CD8-positive, alpha-beta T cell (primary cell): ENCODE measurements at regions of chr6 and their contacts with region 1.

Region 1: GRCh38 chr6:29705389-29706231 is 17.6 kb upstream of the HLA-F start:
- DNase-seq: peak in 2 of 9 experiments; percentile 57 to 73
- ATAC-seq: no peak
- H3K4me3 ChIP-seq: no peak overlapping the region
- H3K4me3 Mint-ChIP-seq: peak overlapping the region; percentile 26
- H3K27ac ChIP-seq: no peak overlapping the region
- H3K27ac Mint-ChIP-seq: peak overlapping the region; percentile 77
- H3K4me1 ChIP-seq: peaks cover 53% of the 10 kb centered on the region
- H3K4me1 Mint-ChIP-seq: peaks cover 55% of the 10 kb centered on the region
- H3K27me3 ChIP-seq: no peaks in the 10 kb centered on the region
- H3K27me3 Mint-ChIP-seq: peaks cover 19% of the 10 kb centered on the region
- CTCF ChIP-seq: peak; percentile 79

Region 2: GRCh38 chr6:29567991-29568390 is 137.6 kb before region 1 on chr6:
- CTCF ChIA-PET with region 1: no interaction called
- POLR2A ChIA-PET with region 1: no interaction called
- intact Hi-C with region 1: no loop called
- DNase-seq: no peak
- ATAC-seq: no peak
- H3K4me3 ChIP-seq: no peak overlapping the region
- H3K4me3 Mint-ChIP-seq: no peak overlapping the region
- H3K27ac ChIP-seq: no peak overlapping the region
- H3K27ac Mint-ChIP-seq: no peak overlapping the region
- H3K4me1 ChIP-seq: no peaks in the 10 kb centered on the region
- H3K4me1 Mint-ChIP-seq: peaks cover 3% of the 10 kb centered on the region
- H3K27me3 ChIP-seq: peaks cover 0 to 7% of the 10 kb centered on the region in 2 experiments
- H3K27me3 Mint-ChIP-seq: peaks cover 57% of the 10 kb centered on the region
- CTCF ChIP-seq: no peak

Region 3: GRCh38 chr6:29723262-29723665 is 17.7 kb after region 1 on chr6 and contains the start of gene HLA-F:
- CTCF ChIA-PET with region 1: interaction called, 25 read pairs
- POLR2A ChIA-PET with region 1: interaction called, 15 read pairs
- intact Hi-C with region 1: no loop called
- DNase-seq: peak; percentile 69 to 98 (median 85)
- ATAC-seq: peak; percentile 77
- H3K4me3 ChIP-seq: peak within 1 kb of the TSS; percentile 98
- H3K4me3 Mint-ChIP-seq: peak within 1 kb of the TSS; percentile 93
- H3K27ac ChIP-seq: peak within 1 kb of the TSS; percentile 88 to 100
- H3K27ac Mint-ChIP-seq: peak within 1 kb of the TSS; percentile 97
- H3K4me1 ChIP-seq: peaks cover 48% of the 10 kb centered on the region
- H3K4me1 Mint-ChIP-seq: peaks cover 56% of the 10 kb centered on the region
- H3K27me3 ChIP-seq: no peaks in the 10 kb centered on the region
- H3K27me3 Mint-ChIP-seq: no peaks in the 10 kb centered on the region
- CTCF ChIP-seq: no peak
- total RNA-seq, gene HLA-F: 378 to 382 TPM

Region 4: DNA sequence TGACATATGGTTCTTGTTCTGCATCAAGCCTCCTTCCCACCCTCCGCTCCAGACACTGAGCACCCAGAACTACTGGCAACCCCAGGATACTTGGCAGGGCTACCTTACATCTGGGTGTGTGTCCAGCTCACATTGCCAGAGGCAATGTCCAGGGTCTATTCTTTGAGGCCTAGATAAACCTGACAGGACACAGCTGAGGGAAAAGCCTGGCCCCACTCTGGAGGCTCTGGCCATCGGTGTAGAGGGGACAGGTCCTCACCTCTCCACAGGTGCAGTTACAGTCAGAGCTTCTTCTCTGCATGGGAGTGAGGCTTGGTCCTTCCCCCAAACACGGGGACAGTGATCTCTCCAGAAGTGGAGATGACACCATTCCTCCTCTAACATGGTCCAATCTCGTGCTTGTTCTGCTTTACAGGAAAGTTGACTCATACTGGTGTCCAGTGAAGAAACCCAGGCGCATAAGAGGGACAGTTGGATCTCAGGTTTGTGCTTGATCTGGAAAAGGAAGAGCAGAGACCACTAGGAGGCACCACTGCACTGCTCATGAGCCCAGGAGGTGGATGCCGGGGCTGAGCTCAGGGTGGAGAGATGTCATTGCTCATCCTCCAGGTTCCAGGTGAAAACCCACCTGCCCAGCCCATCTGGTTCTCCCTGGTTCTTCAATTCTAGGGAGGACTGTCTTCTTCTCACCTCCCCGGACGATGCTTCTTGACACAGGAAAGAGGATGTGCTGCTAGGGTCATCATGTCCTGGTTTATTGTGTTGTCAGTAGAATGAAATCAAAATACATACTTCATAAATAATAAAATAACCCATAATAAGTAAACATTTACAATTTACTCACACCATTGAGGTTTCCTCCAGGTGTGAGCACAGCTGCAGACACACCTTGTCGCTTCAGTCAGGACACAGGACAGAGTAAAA is 32.4 kb after region 1 on chr6:
- CTCF ChIA-PET with region 1: interaction called, 19 read pairs
- POLR2A ChIA-PET with region 1: interaction called, 4 read pairs
- intact Hi-C with region 1: loop called in 1 of 2 experiments (anchors 1 kb)
- DNase-seq: peak; percentile 45 to 87 (median 75)
- ATAC-seq: peak; percentile 89
- H3K4me3 ChIP-seq: no peak overlapping the region
- H3K4me3 Mint-ChIP-seq: no peak overlapping the region
- H3K27ac ChIP-seq: no peak overlapping the region
- H3K27ac Mint-ChIP-seq: no peak overlapping the region
- H3K4me1 ChIP-seq: no peaks in the 10 kb centered on the region
- H3K4me1 Mint-ChIP-seq: peaks cover 16% of the 10 kb centered on the region
- H3K27me3 ChIP-seq: no peaks in the 10 kb centered on the region
- H3K27me3 Mint-ChIP-seq: no peaks in the 10 kb centered on the region
- CTCF ChIP-seq: peak; percentile 67

Region 5: GRCh38 chr6:29792123-29793035 is 86.8 kb after region 1 on chr6:
- CTCF ChIA-PET with region 1: interaction called, 5 read pairs
- POLR2A ChIA-PET with region 1: no interaction called
- intact Hi-C with region 1: loop called in 1 of 2 experiments (anchors 5 kb)
- DNase-seq: peak; percentile 65 to 88 (median 77)
- ATAC-seq: peak; percentile 91
- H3K4me3 ChIP-seq: peak overlapping the region; percentile 65 to 95
- H3K4me3 Mint-ChIP-seq: peak overlapping the region; percentile 90
- H3K27ac ChIP-seq: peak overlapping the region; percentile 58 to 84
- H3K27ac Mint-ChIP-seq: peak overlapping the region; percentile 83
- H3K4me1 ChIP-seq: peaks cover 13% of the 10 kb centered on the region
- H3K4me1 Mint-ChIP-seq: peaks cover 15% of the 10 kb centered on the region
- H3K27me3 ChIP-seq: peaks cover 0 to 8% of the 10 kb centered on the region in 2 experiments
- H3K27me3 Mint-ChIP-seq: peaks cover 32% of the 10 kb centered on the region
- CTCF ChIP-seq: no peak

Region 6: GRCh38 chr6:29834564-29835436 is 129.2 kb after region 1 on chr6:
- CTCF ChIA-PET with region 1: interaction called, 34 read pairs
- POLR2A ChIA-PET with region 1: no interaction called
- intact Hi-C with region 1: loop called (anchors 1 kb)
- DNase-seq: peak; percentile 26 to 77 (median 61)
- ATAC-seq: peak; percentile 57
- H3K4me3 ChIP-seq: no peak overlapping the region
- H3K4me3 Mint-ChIP-seq: no peak overlapping the region
- H3K27ac ChIP-seq: no peak overlapping the region
- H3K27ac Mint-ChIP-seq: no peak overlapping the region
- H3K4me1 ChIP-seq: no peaks in the 10 kb centered on the region
- H3K4me1 Mint-ChIP-seq: no peaks in the 10 kb centered on the region
- H3K27me3 ChIP-seq: peaks cover 0 to 8% of the 10 kb centered on the region in 2 experiments
- H3K27me3 Mint-ChIP-seq: peaks cover 68% of the 10 kb centered on the region
- CTCF ChIP-seq: peak; percentile 79

Region 7: DNA sequence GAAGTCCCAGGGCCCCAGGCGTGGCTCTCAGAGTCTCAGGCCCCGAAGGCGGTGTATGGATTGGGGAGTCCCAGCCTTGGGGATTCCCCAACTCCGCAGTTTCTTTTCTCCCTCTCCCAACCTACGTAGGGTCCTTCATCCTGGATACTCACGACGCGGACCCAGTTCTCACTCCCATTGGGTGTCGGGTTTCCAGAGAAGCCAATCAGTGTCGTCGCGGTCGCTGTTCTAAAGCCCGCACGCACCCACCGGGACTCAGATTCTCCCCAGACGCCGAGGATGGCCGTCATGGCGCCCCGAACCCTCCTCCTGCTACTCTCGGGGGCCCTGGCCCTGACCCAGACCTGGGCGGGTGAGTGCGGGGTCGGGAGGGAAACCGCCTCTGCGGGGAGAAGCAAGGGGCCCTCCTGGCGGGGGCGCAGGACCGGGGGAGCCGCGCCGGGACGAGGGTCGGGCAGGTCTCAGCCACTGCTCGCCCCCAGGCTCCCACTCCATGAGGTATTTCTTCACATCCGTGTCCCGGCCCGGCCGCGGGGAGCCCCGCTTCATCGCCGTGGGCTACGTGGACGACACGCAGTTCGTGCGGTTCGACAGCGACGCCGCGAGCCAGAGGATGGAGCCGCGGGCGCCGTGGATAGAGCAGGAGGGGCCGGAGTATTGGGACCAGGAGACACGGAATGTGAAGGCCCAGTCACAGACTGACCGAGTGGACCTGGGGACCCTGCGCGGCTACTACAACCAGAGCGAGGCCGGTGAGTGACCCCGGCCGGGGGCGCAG is 236.9 kb after region 1 on chr6 and contains the start of gene HLA-A:
- CTCF ChIA-PET with region 1: no interaction called
- POLR2A ChIA-PET with region 1: no interaction called
- intact Hi-C with region 1: loop called in 1 of 2 experiments (anchors 5 kb)
- DNase-seq: peak; percentile 86 to 98 (median 94)
- ATAC-seq: peak; percentile 84
- H3K4me3 ChIP-seq: peak within 1 kb of the TSS; percentile 75 to 82
- H3K4me3 Mint-ChIP-seq: peak within 1 kb of the TSS; percentile 94
- H3K27ac ChIP-seq: peak within 1 kb of the TSS; percentile 99 to 100
- H3K27ac Mint-ChIP-seq: peak within 1 kb of the TSS; percentile 100
- H3K4me1 ChIP-seq: peaks cover 49% of the 10 kb centered on the region
- H3K4me1 Mint-ChIP-seq: peaks cover 48% of the 10 kb centered on the region
- H3K27me3 ChIP-seq: no peaks in the 10 kb centered on the region
- H3K27me3 Mint-ChIP-seq: no peaks in the 10 kb centered on the region
- CTCF ChIP-seq: no peak
- total RNA-seq, gene HLA-A: 2,151 to 2,183 TPM